ENCODE measurements at regions of chr17 and their contacts with region 1.

Region 1: DNA sequence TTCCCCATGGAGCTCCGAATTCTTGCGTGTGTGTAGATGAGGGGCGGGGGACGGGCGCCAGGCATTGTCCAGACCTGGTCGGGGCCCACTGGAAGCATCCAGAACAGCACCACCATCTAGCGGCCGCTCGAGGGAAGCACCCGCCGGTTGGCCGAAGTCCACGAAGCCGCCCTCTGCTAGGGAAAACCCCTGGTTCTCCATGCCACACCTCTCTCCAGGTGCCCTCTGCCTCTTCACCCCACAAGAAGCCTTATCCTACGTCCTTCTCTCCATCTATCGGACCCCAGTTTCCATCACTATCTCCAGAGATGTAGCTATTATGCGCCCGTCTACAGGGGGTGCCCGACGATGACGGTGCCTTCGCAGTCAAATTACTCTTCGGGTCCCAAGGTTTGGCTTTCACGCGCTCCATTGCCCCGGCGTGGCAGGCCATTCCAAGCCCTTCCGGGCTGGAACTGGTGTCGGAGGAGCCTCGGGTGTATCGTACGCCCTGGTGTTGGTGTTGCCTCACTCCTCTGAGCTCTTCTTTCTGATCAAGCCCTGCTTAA is 617 bp upstream of the SENP3 start:
- DNase-seq: peak; percentile 74 to 85 (median 81)
- H3K4me3 ChIP-seq: peak overlapping the region; percentile 95
- H3K4me3 Mint-ChIP-seq: peak overlapping the region; percentile 88 to 97 (median 89)
- H3K27ac ChIP-seq: peak overlapping the region; percentile 94
- H3K27ac Mint-ChIP-seq: peak overlapping the region; percentile 91 to 99 (median 98)
- H3K4me1 ChIP-seq: peaks cover 37% of the 10 kb centered on the region
- H3K4me1 Mint-ChIP-seq: peaks cover 23 to 33% (median 25%) of the 10 kb centered on the region in 3 donors
- H3K27me3 ChIP-seq: no peaks in the 10 kb centered on the region
- H3K27me3 Mint-ChIP-seq: peaks cover 0 to 4% of the 10 kb centered on the region in 2 donors

Region 2: GRCh38 chr17:7314719-7315569 is 246.2 kb before region 1 on chr17 and contains the start of gene GPS2:
- CTCF ChIA-PET with region 1: no interaction called
- POLR2A ChIA-PET with region 1: no interaction called
- DNase-seq: peak; percentile 88 to 94 (median 90)
- H3K4me3 ChIP-seq: peak within 1 kb of the TSS; percentile 66
- H3K4me3 Mint-ChIP-seq: peak within 1 kb of the TSS; percentile 87 to 96 (median 92)
- H3K27ac ChIP-seq: peak within 1 kb of the TSS; percentile 76
- H3K27ac Mint-ChIP-seq: peak within 1 kb of the TSS; percentile 92 to 97 (median 94)
- H3K4me1 ChIP-seq: peaks cover 49% of the 10 kb centered on the region
- H3K4me1 Mint-ChIP-seq: peaks cover 44 to 58% (median 48%) of the 10 kb centered on the region in 3 donors
- H3K27me3 ChIP-seq: no peaks in the 10 kb centered on the region
- H3K27me3 Mint-ChIP-seq: peaks cover 0 to 8% of the 10 kb centered on the region in 2 donors
- total RNA-seq, gene GPS2: 81.1 to 85.2 TPM

Region 3: DNA sequence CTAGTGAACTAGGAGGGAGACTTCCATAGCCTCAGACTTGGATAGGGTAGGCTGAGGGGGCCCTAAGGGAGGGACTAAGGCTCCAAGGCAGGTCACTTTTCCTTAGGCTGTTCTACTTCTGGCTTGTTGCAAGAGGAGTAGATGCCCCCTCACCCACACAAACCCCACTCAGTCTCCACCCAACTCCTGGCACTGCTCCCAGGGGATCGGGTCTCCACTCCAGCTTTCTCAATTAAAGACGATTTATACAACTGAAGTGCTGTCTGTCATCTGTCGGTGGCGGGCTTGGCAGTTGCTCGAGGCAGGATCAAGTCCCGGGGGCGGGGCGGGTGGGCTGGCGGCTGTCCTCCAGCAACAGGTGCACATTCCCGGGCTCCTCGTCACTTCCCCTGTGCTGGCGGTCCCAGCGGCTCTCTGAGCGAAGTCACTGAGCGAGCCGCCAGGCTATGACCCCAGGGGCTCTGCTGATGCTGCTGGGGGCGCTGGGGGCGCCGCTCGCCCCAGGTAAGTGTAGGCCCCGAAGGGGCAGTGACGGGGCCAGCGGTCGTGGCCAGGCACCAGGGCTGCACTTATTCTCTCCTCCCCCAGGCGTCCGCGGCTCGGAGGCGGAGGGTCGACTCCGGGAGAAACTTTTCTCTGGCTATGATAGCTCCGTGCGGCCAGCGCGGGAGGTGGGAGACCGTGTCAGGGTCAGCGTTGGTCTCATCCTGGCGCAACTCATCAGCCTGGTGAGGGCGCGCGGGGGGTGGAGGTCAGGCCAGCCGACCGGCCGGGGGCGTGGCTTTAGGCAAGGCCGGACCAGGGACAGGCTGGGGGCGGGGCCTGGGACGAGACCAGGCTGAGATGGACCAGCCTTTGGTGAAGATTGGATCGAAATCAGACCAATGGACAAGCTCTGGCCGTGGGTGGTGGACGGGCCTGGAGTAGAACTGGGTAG is 116.2 kb before region 1 on chr17 and contains the start of gene CHRNB1:
- CTCF ChIA-PET with region 1: interaction called, 10 read pairs
- POLR2A ChIA-PET with region 1: interaction called, 3 read pairs
- DNase-seq: peak in 1 of 5 donors; percentile 21
- H3K4me3 ChIP-seq: no peak within 1 kb of the TSS
- H3K4me3 Mint-ChIP-seq: peak within 1 kb of the TSS; percentile 53 to 88 (median 77)
- H3K27ac ChIP-seq: no peak within 1 kb of the TSS
- H3K27ac Mint-ChIP-seq: peak within 1 kb of the TSS in 4 of 8 donors; percentile 35 to 74 (median 66)
- H3K4me1 ChIP-seq: peaks cover 22% of the 10 kb centered on the region
- H3K4me1 Mint-ChIP-seq: peaks cover 17 to 34% (median 24%) of the 10 kb centered on the region in 3 donors
- H3K27me3 ChIP-seq: peaks cover 46% of the 10 kb centered on the region
- H3K27me3 Mint-ChIP-seq: peaks cover 43 to 73% of the 10 kb centered on the region in 2 donors
- total RNA-seq, gene CHRNB1: 6.0 to 6.3 TPM

Region 4: GRCh38 chr17:7515911-7516610 is 45.0 kb before region 1 on chr17:
- CTCF ChIA-PET with region 1: interaction called, 75 read pairs
- POLR2A ChIA-PET with region 1: interaction called, 10 read pairs
- DNase-seq: no peak
- H3K4me3 ChIP-seq: no peak overlapping the region
- H3K4me3 Mint-ChIP-seq: no peak overlapping the region
- H3K27ac ChIP-seq: no peak overlapping the region
- H3K27ac Mint-ChIP-seq: peak overlapping the region in 4 of 8 donors; percentile 29 to 79 (median 63)
- H3K4me1 ChIP-seq: no peaks in the 10 kb centered on the region
- H3K4me1 Mint-ChIP-seq: no peaks in the 10 kb centered on the region
- H3K27me3 ChIP-seq: no peaks in the 10 kb centered on the region
- H3K27me3 Mint-ChIP-seq: no peaks in the 10 kb centered on the region

Region 5: DNA sequence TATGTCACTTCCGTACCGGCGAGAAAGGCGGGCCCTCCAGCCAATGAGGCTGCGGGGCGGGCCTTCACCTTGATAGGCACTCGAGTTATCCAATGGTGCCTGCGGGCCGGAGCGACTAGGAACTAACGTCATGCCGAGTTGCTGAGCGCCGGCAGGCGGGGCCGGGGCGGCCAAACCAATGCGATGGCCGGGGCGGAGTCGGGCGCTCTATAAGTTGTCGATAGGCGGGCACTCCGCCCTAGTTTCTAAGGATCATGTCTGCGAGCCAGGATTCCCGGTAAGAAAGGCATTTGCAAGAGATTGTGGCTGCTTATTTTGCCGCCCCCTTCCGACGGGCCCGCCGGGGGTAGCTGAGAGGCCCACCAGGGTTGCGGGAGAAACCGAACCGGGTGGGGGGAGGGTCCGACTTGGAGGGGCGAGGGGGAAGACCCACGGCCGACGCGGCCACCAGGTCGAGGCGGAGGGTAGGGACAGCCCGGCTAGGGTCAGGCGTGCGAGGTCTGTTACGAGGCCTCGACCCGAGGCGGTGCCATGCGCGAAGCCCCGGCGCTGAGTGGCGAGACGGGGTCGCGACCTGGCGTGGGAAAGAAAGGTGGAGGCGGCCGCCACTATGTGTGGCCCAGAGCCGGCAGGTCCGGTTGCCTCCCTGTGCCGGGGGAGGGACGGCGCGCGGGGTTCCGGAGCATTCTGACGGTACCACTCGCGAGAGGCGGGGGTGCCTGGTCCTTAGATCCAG is 11.7 kb after region 1 on chr17:
- CTCF ChIA-PET with region 1: interaction called, 14 read pairs
- POLR2A ChIA-PET with region 1: interaction called, 13 read pairs
- DNase-seq: peak; percentile 99 to 100 (median 100)
- H3K4me3 ChIP-seq: peak overlapping the region; percentile 98
- H3K4me3 Mint-ChIP-seq: peak overlapping the region; percentile 93 to 98 (median 96)
- H3K27ac ChIP-seq: peak overlapping the region; percentile 99
- H3K27ac Mint-ChIP-seq: peak overlapping the region; percentile 96 to 100 (median 98)
- H3K4me1 ChIP-seq: peaks cover 31% of the 10 kb centered on the region
- H3K4me1 Mint-ChIP-seq: peaks cover 39 to 55% (median 48%) of the 10 kb centered on the region in 3 donors
- H3K27me3 ChIP-seq: no peaks in the 10 kb centered on the region
- H3K27me3 Mint-ChIP-seq: peaks cover 0 to 7% of the 10 kb centered on the region in 2 donors

Region 6: DNA sequence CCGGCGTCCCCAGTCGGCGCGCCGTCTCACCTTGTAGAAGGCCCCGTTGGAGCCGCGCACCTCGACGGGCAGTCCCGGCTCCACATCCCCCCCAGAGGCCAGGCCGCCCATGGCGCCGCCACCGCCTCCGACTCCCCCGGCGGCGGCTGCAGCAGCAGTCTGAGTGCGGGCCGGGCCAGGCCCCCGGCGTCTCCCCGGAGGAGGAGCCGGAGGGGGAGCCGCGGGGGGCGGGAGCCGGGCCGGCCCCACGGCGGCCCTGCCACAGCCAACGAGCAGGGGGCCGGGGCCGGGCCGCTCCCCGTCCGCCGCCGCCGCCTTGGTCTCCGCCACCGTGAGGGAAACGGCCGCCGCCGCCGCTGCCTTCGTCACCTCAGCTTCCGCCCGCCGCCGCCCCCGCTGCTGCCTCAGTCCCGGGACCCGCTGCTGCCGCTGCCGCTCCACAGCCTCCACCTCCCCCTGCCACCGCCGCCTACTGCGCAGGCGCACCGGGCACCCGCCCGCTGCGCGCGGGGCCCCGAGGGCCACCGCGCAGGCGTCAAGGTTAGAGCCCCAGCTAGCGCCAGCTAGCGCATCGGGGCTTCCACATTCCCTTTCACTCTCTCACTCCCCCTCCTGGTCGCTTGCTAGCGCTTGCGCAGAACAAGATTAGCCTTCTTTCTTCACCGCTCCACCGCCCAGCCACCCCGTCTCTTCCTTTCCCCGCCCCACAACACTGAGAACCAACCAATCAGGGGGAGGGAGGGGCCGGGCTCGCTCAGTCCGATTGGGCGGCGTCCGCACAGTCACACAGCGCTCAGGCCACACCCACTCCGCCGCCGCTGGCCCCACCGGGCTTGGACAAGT is 53.5 kb after region 1 on chr17 and contains the start of gene FXR2:
- CTCF ChIA-PET with region 1: interaction called, 11 read pairs
- POLR2A ChIA-PET with region 1: no interaction called
- DNase-seq: peak; percentile 98 to 99 (median 98)
- H3K4me3 ChIP-seq: peak within 1 kb of the TSS; percentile 93
- H3K4me3 Mint-ChIP-seq: peak within 1 kb of the TSS; percentile 82 to 96 (median 92)
- H3K27ac ChIP-seq: peak within 1 kb of the TSS; percentile 88
- H3K27ac Mint-ChIP-seq: peak within 1 kb of the TSS; percentile 87 to 99 (median 96)
- H3K4me1 ChIP-seq: peaks cover 26% of the 10 kb centered on the region
- H3K4me1 Mint-ChIP-seq: peaks cover 31 to 41% (median 36%) of the 10 kb centered on the region in 3 donors
- H3K27me3 ChIP-seq: no peaks in the 10 kb centered on the region
- H3K27me3 Mint-ChIP-seq: no peaks in the 10 kb centered on the region
- total RNA-seq, gene FXR2: 45.7 to 45.9 TPM

Measured in CD8-positive, alpha-beta memory T cell (primary cell).